Right cardiac atrium (tissue), 5 donors: ENCODE measurements at regions of chr6 and their contacts with region 1.

Region 1: GRCh38 chr6:116444092-116444491 is 17.1 kb upstream of the CALHM6 start:
- DNase-seq: no peak
- ATAC-seq: peak; percentile 60 to 70
- H3K4me3 ChIP-seq: no peak overlapping the region
- H3K27ac ChIP-seq: no peak overlapping the region
- H3K4me1 ChIP-seq: peaks cover 3% of the 10 kb centered on the region
- H3K27me3 ChIP-seq: no peaks in the 10 kb centered on the region

Region 2: DNA sequence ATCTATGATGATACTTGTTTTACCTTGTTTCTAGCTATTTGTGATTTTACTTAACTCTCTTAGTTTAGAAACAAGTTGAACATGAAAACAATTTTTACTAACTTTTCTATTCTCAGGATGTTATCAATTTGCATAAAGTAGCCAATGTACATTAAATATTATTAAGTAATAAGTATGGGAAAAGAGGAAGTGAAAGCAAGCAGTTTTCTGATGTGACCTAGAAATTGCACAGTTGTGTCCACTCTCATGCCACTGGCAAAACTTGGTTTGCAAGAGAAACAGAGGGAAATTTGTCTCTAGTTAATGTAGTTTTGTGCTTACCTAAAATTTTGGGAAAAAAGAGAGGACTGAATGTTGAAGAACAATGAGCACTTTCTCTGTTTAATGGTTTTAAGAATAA is 145.1 kb before region 1 on chr6:
- intact Hi-C with region 1: loop called in 1 of 4 experiments (anchors 10 kb)
- DNase-seq: no peak
- ATAC-seq: no peak
- H3K4me3 ChIP-seq: no peak overlapping the region
- H3K27ac ChIP-seq: no peak overlapping the region
- H3K4me1 ChIP-seq: peaks cover 1% of the 10 kb centered on the region
- H3K27me3 ChIP-seq: no peaks in the 10 kb centered on the region

Region 3: GRCh38 chr6:116371120-116371917 is 72.8 kb before region 1 on chr6:
- intact Hi-C with region 1: loop called in 1 of 4 experiments (anchors 5 kb)
- DNase-seq: peak; percentile 83 to 91 (median 87)
- ATAC-seq: peak; percentile 81 to 89
- H3K4me3 ChIP-seq: peak overlapping the region; percentile 74
- H3K27ac ChIP-seq: peak overlapping the region; percentile 59
- H3K4me1 ChIP-seq: peaks cover 1% of the 10 kb centered on the region
- H3K27me3 ChIP-seq: no peaks in the 10 kb centered on the region